ENCODE measurements at regions of chr17 and their contacts with region 1.

Region 1: DNA sequence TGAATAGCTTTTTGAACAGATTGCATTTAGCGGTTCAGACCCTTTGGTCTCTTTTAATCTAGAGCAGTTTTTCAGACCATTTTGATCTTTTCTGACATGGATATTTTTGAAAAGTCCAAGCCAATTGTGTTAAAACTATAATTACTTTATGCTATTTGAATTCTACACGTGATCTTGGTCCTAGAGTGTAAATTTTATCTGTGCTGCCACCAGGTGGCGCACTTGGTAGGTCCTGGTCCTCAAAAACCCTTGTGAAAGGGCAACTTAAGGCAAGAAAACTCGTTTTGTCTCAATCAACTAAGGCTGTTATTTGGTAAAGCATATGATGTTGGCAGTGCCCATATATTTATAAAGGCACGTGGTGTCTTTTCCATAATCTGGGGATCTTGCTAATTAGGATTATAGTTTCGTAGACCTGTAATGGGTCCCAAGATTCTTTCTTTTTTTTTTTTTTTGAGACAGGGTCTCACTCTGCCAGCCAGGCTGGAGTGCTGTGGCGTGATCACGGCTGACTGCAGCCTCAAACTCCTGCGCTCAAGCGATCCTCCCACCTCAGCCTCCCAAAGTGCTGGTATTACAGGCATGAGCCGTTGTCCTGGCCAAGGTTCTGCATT is 43.9 kb upstream of the TEX2 start:
- DNase-seq: peak; percentile 62 to 66
- ATAC-seq: peak in 5 of 8 donors; percentile 59 to 66 (median 65)
- H3K4me3 ChIP-seq: no peak overlapping the region
- H3K27ac ChIP-seq: no peak overlapping the region
- H3K4me1 ChIP-seq: peaks cover 0 to 28% (median 8%) of the 10 kb centered on the region in 9 donors
- H3K27me3 ChIP-seq: no peaks in the 10 kb centered on the region
- CTCF ChIP-seq: peak; percentile 82 to 90 (median 88)

Region 2: GRCh38 chr17:63984651-63985386 is 322.1 kb before region 1 on chr17:
- intact Hi-C with region 1: no loop called
- DNase-seq: peak; percentile 52 to 76
- ATAC-seq: peak; percentile 65 to 88 (median 81)
- H3K4me3 ChIP-seq: no peak overlapping the region
- H3K27ac ChIP-seq: peak overlapping the region; percentile 44 to 88 (median 78)
- H3K4me1 ChIP-seq: peaks cover 24 to 86% (median 61%) of the 10 kb centered on the region in 9 donors
- H3K27me3 ChIP-seq: peaks cover 0 to 3% (median 0%) of the 10 kb centered on the region in 7 donors
- CTCF ChIP-seq: peak in 1 of 9 donors; percentile 6

Region 3: DNA sequence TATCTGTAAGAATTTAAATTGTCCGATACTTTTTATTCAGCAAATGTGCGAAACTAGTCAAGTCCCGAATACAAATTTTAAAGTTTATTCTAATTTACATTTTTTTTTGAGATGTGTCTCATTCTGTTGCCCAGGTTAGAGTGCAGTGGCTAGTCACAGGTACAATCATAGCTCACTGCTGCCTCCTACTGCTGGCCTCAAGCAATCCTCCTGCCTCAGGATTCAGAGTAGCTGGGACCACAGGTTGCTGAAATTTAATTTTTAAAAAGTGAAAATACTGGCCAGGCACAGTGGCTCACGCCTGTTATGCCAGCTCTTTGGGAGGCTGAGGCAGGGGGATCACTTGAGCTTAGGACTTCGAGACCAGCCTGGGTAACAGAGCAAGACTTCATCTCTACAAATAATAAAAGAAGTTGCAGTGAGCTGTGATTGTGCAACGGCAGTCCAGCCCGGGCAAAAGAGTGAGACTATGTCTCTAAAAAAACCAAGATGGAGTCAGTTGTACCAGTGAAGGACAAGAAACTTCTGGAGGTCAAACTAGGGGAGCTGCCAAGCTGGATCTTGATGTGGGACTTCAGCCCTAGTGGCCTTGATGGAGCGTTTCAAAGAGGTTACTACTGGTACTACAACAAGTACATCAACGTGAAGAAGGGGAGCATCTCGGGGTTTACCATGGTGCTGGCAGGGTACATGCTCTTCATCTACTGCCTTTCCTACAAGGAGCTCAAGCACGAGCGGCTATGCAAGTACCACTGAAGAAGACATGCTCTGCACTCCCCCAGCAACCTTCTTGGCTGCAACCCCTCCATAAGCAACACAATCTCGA is 184.3 kb after region 1 on chr17:
- intact Hi-C with region 1: loop called in 4 of 10 experiments (anchors 5 to 10 kb)
- DNase-seq: peak in 1 of 2 donors; percentile 32
- ATAC-seq: peak in 3 of 8 donors; percentile 54 to 58 (median 55)
- H3K4me3 ChIP-seq: no peak overlapping the region
- H3K27ac ChIP-seq: no peak overlapping the region
- H3K4me1 ChIP-seq: peaks cover 0 to 29% (median 25%) of the 10 kb centered on the region in 9 donors
- H3K27me3 ChIP-seq: no peaks in the 10 kb centered on the region
- CTCF ChIP-seq: peak in 8 of 9 donors; percentile 17 to 75 (median 53)

Region 4: GRCh38 chr17:64496786-64497564 is 190.0 kb after region 1 on chr17 and contains the start of gene POLG2:
- intact Hi-C with region 1: loop called in 4 of 10 experiments (anchors 5 to 10 kb)
- DNase-seq: peak; percentile 92 to 94
- ATAC-seq: peak; percentile 94 to 98 (median 97)
- H3K4me3 ChIP-seq: peak within 1 kb of the TSS; percentile 42 to 85 (median 76)
- H3K27ac ChIP-seq: peak within 1 kb of the TSS; percentile 39 to 91 (median 82)
- H3K4me1 ChIP-seq: peaks cover 13 to 80% (median 69%) of the 10 kb centered on the region in 9 donors
- H3K27me3 ChIP-seq: no peaks in the 10 kb centered on the region
- CTCF ChIP-seq: peak in 7 of 9 donors; percentile 16 to 54 (median 49)
- total RNA-seq, gene POLG2: 5.1 to 11.1 (median 6.5) TPM